HepG2 (cell line): ENCODE measurements at regions of chr6 and their contacts with region 1.

Region 1: GRCh38 chr6:53544470-53545308 is at the start of gene GCLC:
- DNase-seq: peak; percentile 92
- ATAC-seq: peak; percentile 76
- H3K4me3 ChIP-seq: peak within 1 kb of the TSS; percentile 91 to 99 (median 97)
- H3K27ac ChIP-seq: peak within 1 kb of the TSS; percentile 97
- H3K4me1 ChIP-seq: peaks cover 68% of the 10 kb centered on the region
- H3K27me3 ChIP-seq: no peaks in the 10 kb centered on the region; a peak in 1 of 5 replicates
- CTCF ChIP-seq: peak; percentile 76
- EP300 ChIP-seq: peak in 1 of 2 experiments; percentile 47; a peak in 2 of 4 replicates
- POLR2A ChIP-seq: peak; percentile 92 to 93
- RAD21 ChIP-seq: peak; percentile 99
- total RNA-seq, gene GCLC: 84.6 and 96.9 TPM in 2 replicates

Region 2: GRCh38 chr6:53441035-53441493 is 103.6 kb before region 1 on chr6:
- CTCF ChIA-PET with region 1: no interaction called
- POLR2A ChIA-PET with region 1: no interaction called
- in situ Hi-C with region 1: no loop called
- intact Hi-C with region 1: no loop called
- DNase-seq: no peak
- ATAC-seq: no peak
- H3K4me3 ChIP-seq: no peak overlapping the region
- H3K27ac ChIP-seq: no peak overlapping the region
- H3K4me1 ChIP-seq: peaks cover 7% of the 10 kb centered on the region; the same call in 1 of the 2 replicates
- H3K27me3 ChIP-seq: 0 out of 5 replicates have a peak, but pooled peaks cover 0 to 5% of the 10 kb centered on the region in 2 experiments
- CTCF ChIP-seq: no peak
- EP300 ChIP-seq: no peak
- POLR2A ChIP-seq: no peak
- RAD21 ChIP-seq: no peak

Region 3: DNA sequence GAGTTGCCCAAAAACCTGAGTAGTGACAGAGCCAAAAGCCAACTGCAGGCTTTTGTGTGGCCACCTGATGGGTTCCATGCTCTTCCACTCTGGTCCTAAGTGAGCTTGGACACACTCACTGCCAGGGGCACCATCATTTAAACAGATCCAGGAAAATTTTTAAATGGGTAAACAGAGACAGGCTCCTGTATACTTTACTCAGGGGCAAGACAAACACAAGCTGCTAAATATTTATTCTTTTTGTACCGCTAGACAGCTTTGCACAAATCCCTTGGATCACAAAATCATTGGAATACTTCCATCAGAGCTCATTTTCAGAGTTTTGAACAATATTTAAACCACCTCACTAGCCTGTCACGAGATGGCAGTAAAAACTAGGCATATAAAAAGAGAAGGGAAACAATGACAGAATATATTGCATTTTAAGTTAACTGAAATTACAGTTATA is 31.1 kb before region 1 on chr6:
- CTCF ChIA-PET with region 1: no interaction called
- POLR2A ChIA-PET with region 1: interaction called, 11 read pairs
- in situ Hi-C with region 1: no loop called
- intact Hi-C with region 1: no loop called
- DNase-seq: peak; percentile 19
- ATAC-seq: peak; percentile 59
- H3K4me3 ChIP-seq: no peak overlapping the region
- H3K27ac ChIP-seq: peak overlapping the region; percentile 39
- H3K4me1 ChIP-seq: peaks cover 59% of the 10 kb centered on the region
- H3K27me3 ChIP-seq: no peaks in the 10 kb centered on the region
- CTCF ChIP-seq: peak; percentile 41; the same call in 1 of the 2 replicates
- EP300 ChIP-seq: 0 out of 4 replicates have a peak, but pooled peaks of 1 of the 2 experiments have one; percentile 8
- POLR2A ChIP-seq: no peak
- RAD21 ChIP-seq: no peak

Region 4: DNA sequence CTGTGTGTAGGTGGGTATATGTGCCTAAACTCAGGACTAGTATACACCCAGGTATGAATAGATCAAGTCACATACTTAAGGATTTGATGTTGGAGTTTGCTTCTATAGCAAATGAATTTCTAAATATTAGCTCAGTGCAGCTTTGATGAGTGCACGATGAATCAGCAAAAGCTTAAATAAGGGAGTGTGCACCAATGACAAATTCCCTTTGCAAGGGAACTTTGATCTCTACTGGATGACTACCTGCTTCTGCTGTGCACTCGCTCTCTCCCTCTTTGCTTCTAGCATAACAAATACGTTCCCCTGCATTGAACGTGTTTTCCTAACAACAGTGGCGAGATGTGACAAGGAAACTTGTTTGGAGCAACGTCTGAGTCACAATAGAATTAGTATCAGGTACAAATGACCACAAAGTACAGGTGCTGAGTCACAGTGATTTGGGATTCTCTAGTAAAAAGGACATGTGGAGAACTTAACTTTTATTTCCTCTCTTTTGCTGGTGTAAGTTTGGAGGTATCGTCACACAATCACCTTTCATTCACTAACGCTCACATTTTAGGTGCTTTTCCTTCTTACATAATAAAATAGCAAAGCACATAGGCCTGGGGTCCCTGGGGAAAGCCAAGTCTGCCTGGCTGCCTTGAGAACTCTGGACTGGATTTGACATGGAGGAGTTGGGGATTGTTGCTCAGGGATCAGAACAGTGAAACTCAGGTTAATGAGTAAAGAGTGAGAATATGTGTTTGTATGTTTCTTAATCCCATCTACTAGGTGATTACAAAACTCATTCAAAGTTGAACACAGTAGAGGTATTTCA is 71.2 kb after region 1 on chr6:
- CTCF ChIA-PET with region 1: no interaction called
- POLR2A ChIA-PET with region 1: interaction called, 35 read pairs
- in situ Hi-C with region 1: loop called (anchors 5 kb)
- intact Hi-C with region 1: loop called (anchors 1 kb)
- DNase-seq: peak; percentile 100
- ATAC-seq: peak; percentile 95
- H3K4me3 ChIP-seq: peak overlapping the region; percentile 35 to 60 (median 44); a peak in 5 of 6 replicates
- H3K27ac ChIP-seq: peak overlapping the region; percentile 97
- H3K4me1 ChIP-seq: peaks cover 53% of the 10 kb centered on the region
- H3K27me3 ChIP-seq: no peaks in the 10 kb centered on the region
- CTCF ChIP-seq: no peak; the same call in 1 of the 2 replicates
- EP300 ChIP-seq: peak; percentile 96 to 97
- POLR2A ChIP-seq: peak; percentile 73 to 91
- RAD21 ChIP-seq: no peak; the same call in 1 of the 2 replicates

Region 5: DNA sequence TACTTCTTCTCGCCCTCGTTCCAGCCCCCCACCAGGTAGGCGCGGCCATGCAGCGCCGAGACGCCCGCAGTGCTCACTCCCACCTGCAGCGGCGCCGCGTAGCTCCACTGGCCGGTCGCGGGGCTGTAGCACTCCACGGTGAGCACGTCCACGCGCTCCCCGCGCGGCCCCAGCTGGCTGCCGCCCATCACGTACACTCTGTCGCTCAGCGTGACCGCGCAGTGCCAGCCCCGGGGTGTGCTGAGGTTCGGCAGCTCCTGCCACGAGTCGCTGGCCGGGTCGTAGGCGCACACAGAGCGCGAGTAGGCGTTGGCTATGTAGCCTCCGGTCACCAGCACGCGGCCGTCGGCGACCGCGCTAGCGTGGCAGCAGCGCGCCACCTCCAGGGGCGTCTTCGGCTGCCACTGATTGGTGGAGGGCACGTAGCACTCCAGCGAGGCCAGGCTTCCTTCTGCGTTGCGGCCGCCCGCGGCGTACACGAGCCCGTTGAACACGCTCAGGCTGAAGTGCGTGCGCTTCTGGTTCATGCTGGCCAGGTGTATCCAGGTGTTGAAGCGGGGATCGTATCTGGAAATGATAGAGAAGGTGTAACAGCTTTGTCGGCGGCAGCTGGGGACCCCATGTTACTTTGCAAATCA is 107.2 kb after region 1 on chr6:
- CTCF ChIA-PET with region 1: interaction called, 39 read pairs
- POLR2A ChIA-PET with region 1: interaction called, 52 read pairs
- in situ Hi-C with region 1: loop called (anchors 5 kb)
- intact Hi-C with region 1: loop called (anchors 1 kb)
- DNase-seq: peak; percentile 86
- ATAC-seq: peak; percentile 98
- H3K4me3 ChIP-seq: peak overlapping the region; percentile 65 to 84 (median 73)
- H3K27ac ChIP-seq: peak overlapping the region; percentile 85
- H3K4me1 ChIP-seq: peaks cover 27% of the 10 kb centered on the region
- H3K27me3 ChIP-seq: no peaks in the 10 kb centered on the region; a peak in 1 of 5 replicates
- CTCF ChIP-seq: peak; percentile 93
- EP300 ChIP-seq: peak in 1 of 2 experiments; percentile 40; a peak in 2 of 4 replicates
- POLR2A ChIP-seq: peak; percentile 88
- RAD21 ChIP-seq: peak; percentile 79

Region 6: DNA sequence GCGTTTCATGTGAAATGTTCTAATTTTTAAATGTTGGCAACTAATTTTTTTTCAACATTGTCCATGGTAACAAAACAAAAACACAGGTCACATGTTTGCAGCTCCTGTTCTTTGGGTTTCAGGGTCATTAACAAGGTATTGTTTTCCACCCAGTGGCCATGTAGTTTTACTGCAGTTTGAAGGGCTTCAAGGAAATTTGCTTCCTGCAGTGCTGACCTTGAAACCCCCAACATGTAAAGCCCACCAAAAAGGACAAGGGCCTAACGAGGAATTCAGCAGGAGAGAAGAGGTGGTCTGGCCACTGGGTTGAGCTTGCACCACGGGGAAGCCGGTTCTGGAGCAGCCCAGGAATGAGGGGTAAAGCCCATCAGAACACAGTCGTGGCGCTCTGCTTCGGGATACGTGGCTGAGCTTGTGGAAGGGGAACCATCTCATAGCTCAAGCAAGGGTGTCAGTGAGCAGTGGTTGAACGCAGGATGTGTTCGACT is 134.8 kb after region 1 on chr6:
- CTCF ChIA-PET with region 1: no interaction called
- POLR2A ChIA-PET with region 1: no interaction called
- in situ Hi-C with region 1: no loop called
- intact Hi-C with region 1: no loop called
- DNase-seq: peak; percentile 62
- ATAC-seq: peak; percentile 89
- H3K4me3 ChIP-seq: no peak overlapping the region
- H3K27ac ChIP-seq: no peak overlapping the region
- H3K4me1 ChIP-seq: no peaks in the 10 kb centered on the region
- H3K27me3 ChIP-seq: 0 out of 5 replicates have a peak, but pooled peaks cover 0 to 4% of the 10 kb centered on the region in 2 experiments
- CTCF ChIP-seq: peak; percentile 47
- EP300 ChIP-seq: no peak
- POLR2A ChIP-seq: no peak
- RAD21 ChIP-seq: peak; percentile 54; the same call in 1 of the 2 replicates

Region 7: DNA sequence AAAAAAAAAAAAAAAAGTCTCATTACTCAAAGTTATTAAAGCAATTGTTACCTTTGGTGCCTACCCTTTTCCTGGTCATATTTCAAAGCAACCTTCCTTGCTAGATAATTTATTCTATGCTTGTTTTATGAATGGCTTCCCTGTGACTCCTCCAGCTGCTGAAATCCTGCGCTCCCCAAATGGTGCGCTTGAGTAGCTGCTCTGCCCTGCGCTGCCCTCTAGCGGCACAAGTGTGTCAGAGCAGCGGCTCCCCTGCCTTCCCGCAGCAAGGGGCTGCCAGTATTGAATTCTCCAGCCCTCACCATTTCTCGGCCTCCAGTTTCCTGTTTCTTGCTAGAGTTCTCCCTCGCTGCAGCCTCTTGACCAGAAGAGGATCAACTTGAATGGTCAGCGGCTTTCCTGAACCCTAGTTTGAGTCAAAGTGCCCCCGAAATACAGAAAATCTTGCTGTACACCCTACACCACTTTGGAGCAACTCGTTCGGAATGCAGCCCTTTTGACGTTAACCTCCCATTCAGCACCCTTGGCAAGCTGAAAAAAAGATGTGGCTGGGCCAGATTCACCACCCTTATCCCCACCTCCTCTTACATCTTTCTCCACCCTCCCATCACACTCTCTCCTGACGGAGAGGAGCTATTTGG is 181.2 kb after region 1 on chr6:
- CTCF ChIA-PET with region 1: interaction called, 8 read pairs
- POLR2A ChIA-PET with region 1: interaction called, 4 read pairs
- in situ Hi-C with region 1: no loop called
- intact Hi-C with region 1: loop called (anchors 2 kb)
- DNase-seq: peak; percentile 72
- ATAC-seq: peak; percentile 94
- H3K4me3 ChIP-seq: no peak overlapping the region
- H3K27ac ChIP-seq: no peak overlapping the region
- H3K4me1 ChIP-seq: peaks cover 17% of the 10 kb centered on the region; the same call in 1 of the 2 replicates
- H3K27me3 ChIP-seq: no peaks in the 10 kb centered on the region
- CTCF ChIP-seq: peak; percentile 95
- EP300 ChIP-seq: no peak
- POLR2A ChIP-seq: no peak
- RAD21 ChIP-seq: peak; percentile 82